Activated CD8-positive, alpha-beta T cell treated with anti-CD3 and anti-CD28 coated beads for 36 hours (primary cell): ENCODE measurements at regions of chr7 and their contacts with region 1.

Region 1: GRCh38 chr7:130961128-130961601 is 227.2 kb upstream of the KLF14 start:
- DNase-seq: peak; percentile 91
- ATAC-seq: peak; percentile 89
- H3K4me3 Mint-ChIP-seq: no peak overlapping the region
- H3K27ac Mint-ChIP-seq: peak overlapping the region; percentile 99
- H3K4me1 Mint-ChIP-seq: peaks cover 34% of the 10 kb centered on the region
- H3K27me3 Mint-ChIP-seq: no peaks in the 10 kb centered on the region
- CTCF ChIP-seq: no peak

Region 2: DNA sequence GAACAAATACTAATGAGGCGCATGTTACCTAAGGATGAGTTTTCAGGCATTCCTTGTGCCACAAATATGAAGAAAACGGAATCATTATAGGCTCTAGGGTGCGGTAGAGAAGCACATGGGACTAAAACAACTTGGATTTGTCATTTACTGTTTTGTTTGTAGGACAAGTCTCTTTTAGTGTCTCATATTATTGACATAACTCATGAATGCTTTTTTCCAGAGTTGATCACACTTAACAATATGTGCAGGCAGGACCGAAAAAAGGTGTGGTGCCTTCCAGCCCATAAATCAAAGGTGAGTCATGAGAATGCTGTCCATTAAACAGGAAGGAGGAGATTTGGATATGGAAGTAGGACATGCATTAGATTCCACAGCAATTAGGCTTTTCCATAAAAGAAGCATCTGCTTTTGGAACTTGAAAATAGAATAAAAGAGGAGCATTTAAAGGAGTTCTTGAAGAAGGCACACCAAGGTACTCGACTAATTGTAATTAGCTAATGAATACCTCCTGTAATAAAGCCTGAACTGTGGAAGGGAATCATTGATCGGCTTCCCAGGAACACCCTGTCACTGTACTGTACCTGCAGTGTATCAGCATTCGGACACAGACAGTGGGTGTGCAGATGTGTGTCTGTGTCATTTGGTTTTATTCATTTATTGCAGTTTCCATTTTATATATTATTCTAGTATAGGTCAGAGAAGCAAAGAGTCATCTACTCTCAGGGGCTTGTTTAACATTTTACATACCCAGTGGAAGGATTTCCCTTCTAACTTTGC is 107.5 kb before region 1 on chr7:
- CTCF ChIA-PET with region 1: no interaction called
- POLR2A ChIA-PET with region 1: no interaction called
- intact Hi-C with region 1: no loop called
- DNase-seq: no peak
- ATAC-seq: no peak
- H3K4me3 Mint-ChIP-seq: no peak overlapping the region
- H3K27ac Mint-ChIP-seq: no peak overlapping the region
- H3K4me1 Mint-ChIP-seq: no peaks in the 10 kb centered on the region
- H3K27me3 Mint-ChIP-seq: no peaks in the 10 kb centered on the region
- CTCF ChIP-seq: no peak

Region 3: GRCh38 chr7:130896898-130897514 is 64.2 kb before region 1 on chr7:
- CTCF ChIA-PET with region 1: interaction called, 15 read pairs
- POLR2A ChIA-PET with region 1: interaction called, 4 read pairs
- intact Hi-C with region 1: no loop called
- DNase-seq: peak; percentile 81
- ATAC-seq: peak; percentile 64
- H3K4me3 Mint-ChIP-seq: peak overlapping the region; percentile 40
- H3K27ac Mint-ChIP-seq: peak overlapping the region; percentile 87
- H3K4me1 Mint-ChIP-seq: peaks cover 91% of the 10 kb centered on the region
- H3K27me3 Mint-ChIP-seq: no peaks in the 10 kb centered on the region
- CTCF ChIP-seq: peak; percentile 73

Region 4: GRCh38 chr7:130941322-130942210 is 19.6 kb before region 1 on chr7:
- CTCF ChIA-PET with region 1: interaction called, 12 read pairs
- POLR2A ChIA-PET with region 1: interaction called, 322 read pairs
- intact Hi-C with region 1: no loop called
- DNase-seq: no peak
- ATAC-seq: no peak
- H3K4me3 Mint-ChIP-seq: peak overlapping the region; percentile 73
- H3K27ac Mint-ChIP-seq: peak overlapping the region; percentile 86
- H3K4me1 Mint-ChIP-seq: peaks cover 87% of the 10 kb centered on the region
- H3K27me3 Mint-ChIP-seq: no peaks in the 10 kb centered on the region
- CTCF ChIP-seq: no peak

Region 5: DNA sequence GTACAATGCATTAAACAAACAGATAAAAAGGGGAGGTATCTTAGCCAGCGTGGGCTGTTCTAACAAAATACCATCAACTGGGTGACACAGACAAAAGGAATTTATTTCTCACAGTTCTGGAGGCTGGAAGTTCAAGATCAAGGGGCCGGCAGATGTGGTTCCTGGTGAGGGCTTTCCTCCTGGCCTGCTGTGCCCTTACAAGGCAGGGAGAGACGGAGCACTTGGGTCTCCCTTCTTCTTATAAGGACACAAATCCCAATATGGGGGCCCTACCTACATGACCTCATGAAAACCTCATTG is 54.4 kb after region 1 on chr7:
- CTCF ChIA-PET with region 1: no interaction called
- POLR2A ChIA-PET with region 1: interaction called, 118 read pairs
- intact Hi-C with region 1: loop called (anchors 5 kb)
- DNase-seq: no peak
- ATAC-seq: no peak
- H3K4me3 Mint-ChIP-seq: no peak overlapping the region
- H3K27ac Mint-ChIP-seq: peak overlapping the region; percentile 73
- H3K4me1 Mint-ChIP-seq: peaks cover 87% of the 10 kb centered on the region
- H3K27me3 Mint-ChIP-seq: no peaks in the 10 kb centered on the region
- CTCF ChIP-seq: no peak

Region 6: GRCh38 chr7:131027287-131027773 is 66.2 kb after region 1 on chr7:
- CTCF ChIA-PET with region 1: interaction called, 3 read pairs
- POLR2A ChIA-PET with region 1: interaction called, 50 read pairs
- intact Hi-C with region 1: loop called (anchors 1 kb)
- DNase-seq: peak; percentile 65
- ATAC-seq: peak; percentile 15
- H3K4me3 Mint-ChIP-seq: no peak overlapping the region
- H3K27ac Mint-ChIP-seq: peak overlapping the region; percentile 99
- H3K4me1 Mint-ChIP-seq: peaks cover 82% of the 10 kb centered on the region
- H3K27me3 Mint-ChIP-seq: no peaks in the 10 kb centered on the region
- CTCF ChIP-seq: no peak

Region 7: GRCh38 chr7:131057015-131057793 is 96.0 kb after region 1 on chr7:
- CTCF ChIA-PET with region 1: no interaction called
- POLR2A ChIA-PET with region 1: interaction called, 23 read pairs
- intact Hi-C with region 1: no loop called
- DNase-seq: no peak
- ATAC-seq: peak; percentile 53
- H3K4me3 Mint-ChIP-seq: peak overlapping the region; percentile 43
- H3K27ac Mint-ChIP-seq: peak overlapping the region; percentile 97
- H3K4me1 Mint-ChIP-seq: peaks cover 65% of the 10 kb centered on the region
- H3K27me3 Mint-ChIP-seq: no peaks in the 10 kb centered on the region
- CTCF ChIP-seq: no peak